ENCODE measurements at regions of chr18 and their contacts with region 1.

Region 1: GRCh38 chr18:35756506-35757117 is 175.1 kb downstream of the GALNT1 start:
- DNase-seq: no peak
- ATAC-seq: peak; percentile 75
- H3K4me3 Mint-ChIP-seq: no peak overlapping the region
- H3K27ac Mint-ChIP-seq: no peak overlapping the region
- H3K4me1 Mint-ChIP-seq: no peaks in the 10 kb centered on the region
- H3K27me3 Mint-ChIP-seq: peaks cover 17% of the 10 kb centered on the region
- CTCF ChIP-seq: no peak

Region 2: DNA sequence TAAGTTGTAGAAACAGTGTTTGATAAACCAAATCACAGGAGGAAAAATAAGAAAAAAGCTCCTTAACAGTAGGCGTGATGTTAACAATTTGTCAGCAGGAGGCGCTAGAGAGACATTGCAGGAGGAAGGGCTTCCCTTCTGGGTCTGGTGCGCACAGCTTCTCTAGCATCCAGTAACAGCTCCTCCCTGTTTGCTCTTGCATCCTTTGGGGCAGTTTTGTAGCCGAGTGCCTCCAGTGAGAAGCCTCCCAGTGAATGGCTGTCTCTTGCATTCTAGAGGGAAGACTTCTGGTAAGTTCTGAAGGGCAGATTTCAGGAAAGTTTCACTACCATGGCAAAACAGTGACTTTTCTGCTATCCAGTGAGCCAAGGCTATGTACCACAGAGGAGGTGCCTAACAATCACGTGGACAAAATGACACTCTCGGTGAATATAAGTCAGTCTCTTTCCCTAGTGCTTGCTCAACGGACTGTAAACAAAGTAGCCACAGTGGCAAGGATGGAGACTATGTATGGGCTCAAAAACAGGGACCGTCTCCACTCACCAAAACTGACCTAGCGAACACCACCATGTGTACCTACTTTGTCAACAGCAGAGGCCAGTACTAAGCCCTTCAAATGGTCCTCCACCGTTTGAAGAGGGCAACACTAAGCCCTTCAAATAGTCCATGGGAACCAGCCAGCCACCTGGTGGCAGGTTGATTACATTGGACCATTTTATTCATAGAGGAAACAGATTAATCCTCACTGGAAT is 369.8 kb before region 1 on chr18:
- CTCF ChIA-PET with region 1: interaction called, 8 read pairs
- POLR2A ChIA-PET with region 1: no interaction called
- intact Hi-C with region 1: loop called (anchors 1 kb)
- DNase-seq: no peak
- ATAC-seq: peak; percentile 95
- H3K4me3 Mint-ChIP-seq: no peak overlapping the region
- H3K27ac Mint-ChIP-seq: no peak overlapping the region
- H3K4me1 Mint-ChIP-seq: peaks cover 6% of the 10 kb centered on the region
- H3K27me3 Mint-ChIP-seq: peaks cover 18% of the 10 kb centered on the region
- CTCF ChIP-seq: no peak

Region 3: DNA sequence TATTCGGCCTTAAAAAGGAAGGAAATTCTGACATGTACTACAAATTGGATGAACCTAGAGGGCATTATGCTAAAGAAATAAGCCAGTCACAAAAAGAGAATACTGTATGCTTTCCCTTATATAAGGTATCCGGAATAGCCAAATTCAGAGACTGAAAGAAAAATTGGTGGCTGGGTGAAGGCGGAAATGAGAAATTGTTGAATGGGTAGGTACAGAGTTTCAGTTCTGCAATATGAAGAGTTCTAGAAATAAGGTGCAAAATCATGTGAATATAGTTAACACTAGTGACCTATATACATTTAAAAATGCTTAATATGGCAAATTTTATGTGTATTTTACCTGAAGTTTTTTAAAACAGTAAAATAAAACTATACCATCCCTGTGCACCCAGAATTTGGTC is 259.0 kb after region 1 on chr18:
- CTCF ChIA-PET with region 1: interaction called, 9 read pairs
- POLR2A ChIA-PET with region 1: no interaction called
- intact Hi-C with region 1: loop called (anchors 1 kb)
- DNase-seq: no peak
- ATAC-seq: peak; percentile 75
- H3K4me3 Mint-ChIP-seq: no peak overlapping the region
- H3K27ac Mint-ChIP-seq: peak overlapping the region; percentile 12
- H3K4me1 Mint-ChIP-seq: peaks cover 26% of the 10 kb centered on the region
- H3K27me3 Mint-ChIP-seq: no peaks in the 10 kb centered on the region
- CTCF ChIP-seq: no peak

Region 4: DNA sequence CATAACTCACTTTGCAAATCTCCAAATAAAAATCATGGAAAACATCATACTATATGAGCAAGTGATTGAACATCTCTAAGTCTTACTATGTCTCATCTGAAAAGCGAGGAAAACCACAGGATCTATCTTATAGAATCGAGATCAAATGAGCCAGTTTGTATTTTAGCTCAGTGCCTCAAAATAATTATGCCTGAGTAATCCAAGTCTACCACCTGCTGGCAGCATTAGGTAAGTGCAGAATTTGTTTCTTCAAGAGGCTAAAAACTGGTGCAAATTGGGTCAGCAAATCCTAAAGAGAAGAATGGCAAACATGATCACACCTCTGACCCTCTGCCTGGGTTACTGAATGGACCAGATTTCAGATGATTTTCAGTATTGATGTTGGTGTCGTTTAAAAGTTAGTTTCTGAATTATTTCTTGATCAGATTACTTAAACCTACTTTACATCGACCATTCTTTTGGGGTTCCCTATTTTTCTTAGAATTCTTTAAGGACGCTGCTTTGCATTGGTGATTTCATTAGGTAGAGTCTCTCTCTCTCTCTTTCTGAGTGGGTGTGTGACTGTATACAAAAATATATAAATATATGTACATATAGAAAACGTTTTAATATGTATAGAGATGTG is 528.2 kb after region 1 on chr18:
- CTCF ChIA-PET with region 1: interaction called, 20 read pairs
- POLR2A ChIA-PET with region 1: no interaction called
- intact Hi-C with region 1: loop called (anchors 1 kb)
- DNase-seq: no peak
- ATAC-seq: peak; percentile 64
- H3K4me3 Mint-ChIP-seq: no peak overlapping the region
- H3K27ac Mint-ChIP-seq: no peak overlapping the region
- H3K4me1 Mint-ChIP-seq: peaks cover 2% of the 10 kb centered on the region
- H3K27me3 Mint-ChIP-seq: peaks cover 38% of the 10 kb centered on the region
- CTCF ChIP-seq: peak; percentile 72

Region 5: GRCh38 chr18:36809590-36810381 is 1053.2 kb after region 1 on chr18:
- CTCF ChIA-PET with region 1: no interaction called
- POLR2A ChIA-PET with region 1: no interaction called
- intact Hi-C with region 1: loop called (anchors 1 kb)
- DNase-seq: no peak
- ATAC-seq: peak; percentile 83
- H3K4me3 Mint-ChIP-seq: no peak overlapping the region
- H3K27ac Mint-ChIP-seq: no peak overlapping the region
- H3K4me1 Mint-ChIP-seq: peaks cover 2% of the 10 kb centered on the region
- H3K27me3 Mint-ChIP-seq: no peaks in the 10 kb centered on the region
- CTCF ChIP-seq: peak; percentile 65